ENCODE measurements at regions of chr2 and their contacts with region 1.

Region 1: DNA sequence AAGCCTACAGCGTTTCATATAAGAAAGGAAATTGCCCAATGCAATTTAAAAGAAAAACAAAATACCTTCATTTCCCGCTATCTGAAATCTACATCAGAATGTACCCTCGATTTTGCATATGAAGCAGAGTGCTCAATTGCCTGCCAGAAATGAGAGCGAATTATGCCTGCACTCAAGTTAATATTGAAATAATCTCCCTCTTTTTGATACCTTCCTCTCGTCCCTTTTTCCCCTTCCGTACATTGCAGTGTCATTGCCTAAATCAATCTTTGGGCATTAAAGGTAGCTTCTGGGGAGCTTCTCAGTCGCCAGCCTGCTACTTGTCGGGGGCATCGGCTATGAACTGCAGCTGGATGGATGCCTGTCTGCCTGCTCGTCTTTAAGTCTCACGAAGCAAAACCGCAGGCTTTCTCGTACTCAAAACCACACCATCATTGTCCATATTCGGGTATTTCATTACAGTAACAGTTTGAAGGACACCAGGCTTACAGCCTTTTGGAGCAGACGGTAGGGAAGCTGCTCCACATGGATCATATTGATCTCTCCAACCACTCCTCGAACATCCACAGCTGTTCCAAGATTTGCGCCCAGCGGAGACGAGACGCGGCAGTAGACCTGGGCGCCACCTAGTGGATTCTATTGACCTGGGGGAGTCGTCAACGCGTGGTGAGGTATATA is 64.0 kb upstream of the HNRNPA3 start:
- DNase-seq: peak; percentile 66
- ATAC-seq: peak; percentile 99
- H3K4me3 ChIP-seq: peak overlapping the region; percentile 25 to 67 (median 36)
- H3K27ac ChIP-seq: no peak overlapping the region
- H3K4me1 ChIP-seq: peaks cover 11% of the 10 kb centered on the region
- H3K27me3 ChIP-seq: peaks cover 3 to 50% of the 10 kb centered on the region in 2 experiments; a peak in 4 of 5 replicates
- CTCF ChIP-seq: peak; percentile 92
- EP300 ChIP-seq: no peak
- POLR2A ChIP-seq: no peak
- RAD21 ChIP-seq: peak; percentile 61; the same call in 1 of the 2 replicates

Region 2: DNA sequence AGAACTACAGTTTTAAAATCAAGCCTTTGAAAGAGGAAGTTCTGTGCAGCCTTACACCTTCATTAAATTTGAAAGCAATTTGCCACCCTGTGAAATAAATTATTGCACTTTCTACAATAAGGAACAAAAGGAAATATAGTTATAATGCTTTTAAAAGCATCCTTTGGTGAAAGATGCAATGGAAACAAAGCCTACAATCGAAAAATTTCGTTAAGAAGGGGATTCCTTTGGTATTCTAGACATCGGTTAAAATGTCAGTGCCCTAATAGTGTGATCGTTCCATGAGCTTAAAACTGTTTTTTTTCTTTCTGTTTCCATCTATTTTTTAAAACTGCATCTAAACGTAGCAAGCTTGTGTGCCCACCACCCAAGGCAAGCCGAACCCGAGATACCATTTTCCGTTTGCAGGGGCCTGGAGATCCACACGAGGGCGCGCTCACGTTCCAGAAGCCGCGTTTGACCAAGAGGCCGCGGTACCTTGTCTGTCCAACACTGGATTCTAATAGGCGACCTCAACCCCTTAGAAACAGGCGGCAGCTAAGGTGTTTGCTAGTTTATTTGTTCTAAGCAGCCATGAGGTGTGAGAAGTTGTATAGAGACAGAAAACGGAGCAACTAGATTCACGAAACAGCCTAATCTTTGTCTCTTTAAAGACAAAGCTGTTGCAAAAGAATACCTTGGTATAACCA is 1037.5 kb before region 1 on chr2:
- CTCF ChIA-PET with region 1: no interaction called
- POLR2A ChIA-PET with region 1: no interaction called
- in situ Hi-C with region 1: no loop called
- intact Hi-C with region 1: loop called (anchors 5 kb)
- DNase-seq: peak; percentile 50
- ATAC-seq: peak; percentile 62
- H3K4me3 ChIP-seq: no peak overlapping the region
- H3K27ac ChIP-seq: no peak overlapping the region
- H3K4me1 ChIP-seq: peaks cover 14% of the 10 kb centered on the region
- H3K27me3 ChIP-seq: peaks cover 16 to 88% of the 10 kb centered on the region in 2 experiments; a peak in 4 of 5 replicates
- CTCF ChIP-seq: peak; percentile 87
- EP300 ChIP-seq: no peak
- POLR2A ChIP-seq: no peak
- RAD21 ChIP-seq: peak; percentile 32; the same call in 1 of the 2 replicates

Region 3: DNA sequence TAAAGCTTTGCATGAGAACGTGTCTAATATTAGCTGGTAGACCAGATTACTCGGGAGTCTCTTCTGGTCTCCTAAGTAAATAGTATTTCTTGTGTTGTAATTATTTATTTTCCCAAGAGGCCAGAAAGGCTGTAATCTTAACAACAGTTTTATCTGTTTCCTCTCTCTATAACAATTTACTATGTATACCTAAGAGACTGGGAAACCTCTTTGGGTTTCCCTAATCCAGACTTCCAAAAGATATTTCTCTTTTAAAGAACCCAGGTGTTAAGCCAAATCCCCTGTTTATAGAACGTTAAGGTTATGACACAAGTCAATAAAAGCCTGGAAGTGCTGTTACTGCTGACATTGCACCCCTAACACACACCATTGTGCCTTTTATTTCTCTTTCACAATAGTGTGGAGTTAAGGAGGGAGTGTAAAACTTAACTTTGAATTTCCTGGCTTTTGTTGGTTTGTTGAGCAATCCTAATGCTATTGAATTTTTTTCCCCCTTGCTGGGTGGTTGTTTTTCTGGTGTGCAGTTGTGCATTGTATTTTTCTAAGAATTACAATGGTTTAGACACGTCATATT is 686.7 kb before region 1 on chr2:
- CTCF ChIA-PET with region 1: no interaction called
- POLR2A ChIA-PET with region 1: no interaction called
- in situ Hi-C with region 1: no loop called
- intact Hi-C with region 1: loop called (anchors 10 kb)
- DNase-seq: no peak
- ATAC-seq: no peak
- H3K4me3 ChIP-seq: no peak overlapping the region
- H3K27ac ChIP-seq: no peak overlapping the region
- H3K4me1 ChIP-seq: no peaks in the 10 kb centered on the region
- H3K27me3 ChIP-seq: peaks cover 0 to 19% of the 10 kb centered on the region in 2 experiments; a peak in 2 of 5 replicates
- CTCF ChIP-seq: no peak
- EP300 ChIP-seq: no peak
- POLR2A ChIP-seq: no peak
- RAD21 ChIP-seq: no peak

Region 4: GRCh38 chr2:176814306-176815052 is 334.1 kb before region 1 on chr2:
- CTCF ChIA-PET with region 1: no interaction called
- POLR2A ChIA-PET with region 1: no interaction called
- in situ Hi-C with region 1: no loop called
- intact Hi-C with region 1: loop called (anchors 5 kb)
- DNase-seq: peak; percentile 10
- ATAC-seq: peak; percentile 37; the same call in 1 of the 3 replicates
- H3K4me3 ChIP-seq: no peak overlapping the region
- H3K27ac ChIP-seq: no peak overlapping the region
- H3K4me1 ChIP-seq: no peaks in the 10 kb centered on the region
- H3K27me3 ChIP-seq: peaks cover 0 to 15% of the 10 kb centered on the region in 2 experiments; a peak in 2 of 5 replicates
- CTCF ChIP-seq: peak; percentile 50
- EP300 ChIP-seq: no peak
- POLR2A ChIP-seq: no peak
- RAD21 ChIP-seq: no peak

Region 5: DNA sequence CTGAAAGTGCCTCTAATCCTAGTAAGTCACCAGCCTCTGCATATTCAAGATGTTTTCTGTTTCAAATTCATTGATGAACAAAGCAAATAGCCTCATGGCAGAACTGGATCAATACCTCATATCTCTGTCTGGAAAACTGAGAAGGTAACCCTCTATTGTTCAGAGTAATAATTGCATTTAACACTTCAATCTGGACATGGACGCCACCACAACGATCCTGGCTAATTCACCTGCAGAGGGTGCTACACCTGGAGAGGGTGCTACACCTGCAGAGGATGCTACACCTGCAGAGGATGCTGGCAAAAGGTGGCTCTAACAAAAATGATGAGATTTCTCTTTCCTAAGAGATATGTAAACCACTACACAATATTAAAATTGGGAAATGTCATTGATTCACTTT is 119.1 kb before region 1 on chr2:
- CTCF ChIA-PET with region 1: no interaction called
- POLR2A ChIA-PET with region 1: no interaction called
- in situ Hi-C with region 1: no loop called
- intact Hi-C with region 1: loop called (anchors 1 kb)
- DNase-seq: no peak
- ATAC-seq: peak; percentile 32; the same call in 1 of the 3 replicates
- H3K4me3 ChIP-seq: no peak overlapping the region
- H3K27ac ChIP-seq: no peak overlapping the region
- H3K4me1 ChIP-seq: no peaks in the 10 kb centered on the region
- H3K27me3 ChIP-seq: peaks cover 0 to 11% of the 10 kb centered on the region in 2 experiments; a peak in 1 of 5 replicates
- CTCF ChIP-seq: peak; percentile 25
- EP300 ChIP-seq: no peak
- POLR2A ChIP-seq: no peak
- RAD21 ChIP-seq: no peak

Region 6: DNA sequence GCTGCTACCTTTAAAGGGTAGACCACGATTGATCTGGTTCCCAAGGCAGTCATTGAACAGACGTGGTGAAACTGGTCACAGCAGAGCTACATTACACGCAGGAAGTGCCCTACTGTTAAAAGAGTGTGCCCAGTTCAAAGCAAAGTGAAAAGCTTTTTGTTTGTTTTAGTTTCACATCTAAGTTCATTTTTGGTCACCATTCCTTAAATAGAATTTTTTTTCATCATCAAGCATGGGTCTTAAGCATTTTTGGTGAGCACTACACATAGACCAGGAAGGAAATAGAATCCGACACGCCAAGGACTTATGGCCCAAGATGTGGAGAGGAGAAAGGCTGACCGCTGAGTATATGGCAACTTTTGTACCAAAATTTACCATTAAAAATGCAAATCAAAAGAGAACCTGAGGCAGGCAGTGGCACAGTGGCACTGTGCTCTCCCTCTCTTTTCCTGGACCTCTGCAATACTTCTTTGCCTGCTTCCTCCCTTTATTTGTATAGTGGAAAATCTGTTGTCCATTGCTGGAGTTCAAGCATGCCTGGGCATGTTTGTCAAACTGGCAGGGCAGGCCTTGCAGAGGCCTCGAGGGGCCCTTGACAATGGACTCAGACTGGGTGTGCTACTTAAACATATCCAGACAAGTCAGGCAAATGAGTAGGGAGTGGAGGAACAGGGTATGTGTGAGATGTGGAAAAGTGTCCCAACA is 21.3 kb after region 1 on chr2:
- CTCF ChIA-PET with region 1: no interaction called
- POLR2A ChIA-PET with region 1: no interaction called
- in situ Hi-C with region 1: no loop called
- intact Hi-C with region 1: no loop called
- DNase-seq: peak; percentile 86
- ATAC-seq: peak; percentile 46
- H3K4me3 ChIP-seq: no peak overlapping the region
- H3K27ac ChIP-seq: peak overlapping the region; percentile 69
- H3K4me1 ChIP-seq: peaks cover 96% of the 10 kb centered on the region
- H3K27me3 ChIP-seq: no peaks in the 10 kb centered on the region
- CTCF ChIP-seq: no peak
- EP300 ChIP-seq: peak in 1 of 2 experiments; percentile 73; a peak in 2 of 4 replicates
- POLR2A ChIP-seq: 0 out of 4 replicates have a peak, but pooled peaks of 1 of the 2 experiments have one; percentile 35
- RAD21 ChIP-seq: peak; percentile 25; the same call in 1 of the 2 replicates